ENCODE measurements at regions of chr4 and their contacts with region 1.

Region 1: GRCh38 chr4:46844325-46844917 is 64.6 kb downstream of the COX7B2 start:
- DNase-seq: no peak
- H3K4me3 Mint-ChIP-seq: no peak overlapping the region
- H3K27ac Mint-ChIP-seq: no peak overlapping the region
- H3K4me1 Mint-ChIP-seq: no peaks in the 10 kb centered on the region
- H3K27me3 Mint-ChIP-seq: no peaks in the 10 kb centered on the region

Region 2: DNA sequence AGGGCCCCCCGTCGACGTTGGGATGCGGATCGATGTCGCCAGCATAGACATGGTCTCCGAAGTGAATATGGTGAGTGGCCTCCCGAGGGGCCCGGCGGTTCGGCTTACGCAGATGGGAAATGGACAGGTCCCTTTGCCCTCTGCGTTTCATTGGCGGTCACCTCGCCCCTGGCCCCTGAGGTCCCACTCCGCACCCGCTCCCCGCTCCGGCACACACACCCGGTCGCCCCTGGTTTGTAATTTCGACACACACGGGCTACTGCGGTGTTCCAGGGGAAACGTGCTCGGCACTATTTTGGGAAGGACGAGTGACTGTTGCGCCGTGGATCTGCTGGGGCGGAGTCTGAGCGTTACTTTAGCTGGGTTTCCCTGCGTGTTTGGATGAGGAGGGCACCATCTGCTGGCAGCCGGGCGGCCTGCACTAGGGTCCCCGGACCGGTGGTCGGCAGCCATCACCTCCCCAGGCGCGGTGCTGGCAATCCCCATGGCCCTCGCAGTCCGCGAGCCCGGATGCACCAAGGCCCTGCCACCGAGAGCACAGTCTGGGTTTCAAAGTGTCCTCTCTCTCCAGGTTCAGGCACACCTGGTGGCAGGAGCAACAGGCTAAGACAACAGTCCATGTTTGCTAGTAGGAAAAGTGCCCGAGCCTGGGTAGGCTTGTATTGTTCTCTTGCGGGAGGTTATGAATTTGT is 188.1 kb after region 1 on chr4:
- intact Hi-C with region 1: loop called (anchors 1 kb)
- DNase-seq: peak; percentile 11
- H3K4me3 Mint-ChIP-seq: peak overlapping the region; percentile 74
- H3K27ac Mint-ChIP-seq: no peak overlapping the region
- H3K4me1 Mint-ChIP-seq: peaks cover 20% of the 10 kb centered on the region
- H3K27me3 Mint-ChIP-seq: peaks cover 48% of the 10 kb centered on the region

Region 3: DNA sequence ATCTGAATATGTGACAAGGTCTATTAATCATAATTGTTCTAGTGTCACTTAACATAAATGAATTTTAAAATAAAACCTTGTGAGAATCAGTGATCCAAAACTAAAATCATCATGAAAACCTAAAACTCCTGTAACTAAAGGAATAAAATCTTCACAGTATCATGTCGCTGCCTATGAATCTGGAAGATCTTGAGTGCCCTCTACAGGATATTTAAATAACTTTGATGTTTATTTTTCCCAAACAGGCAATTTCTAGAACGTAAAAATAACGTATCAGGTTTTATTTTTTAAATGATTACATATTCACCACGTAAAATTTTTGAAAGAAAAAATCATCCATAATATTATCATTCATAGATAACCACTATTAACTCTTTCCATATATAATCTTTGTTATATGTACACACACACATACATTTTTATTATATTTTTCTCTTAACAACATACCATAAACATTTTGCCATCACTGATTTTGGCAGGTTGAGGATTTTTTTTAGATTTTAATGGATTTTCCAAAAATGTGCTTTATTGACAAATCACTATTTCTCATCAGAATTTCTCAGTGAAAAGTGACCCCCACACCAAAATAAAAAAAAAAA is 539.5 kb after region 1 on chr4:
- intact Hi-C with region 1: loop called (anchors 1 kb)
- DNase-seq: no peak
- H3K4me3 Mint-ChIP-seq: no peak overlapping the region
- H3K27ac Mint-ChIP-seq: no peak overlapping the region
- H3K4me1 Mint-ChIP-seq: no peaks in the 10 kb centered on the region
- H3K27me3 Mint-ChIP-seq: peaks cover 2% of the 10 kb centered on the region